IMR-90 (cell line): ENCODE measurements at regions of chrX and their contacts with region 1.

Region 1: DNA sequence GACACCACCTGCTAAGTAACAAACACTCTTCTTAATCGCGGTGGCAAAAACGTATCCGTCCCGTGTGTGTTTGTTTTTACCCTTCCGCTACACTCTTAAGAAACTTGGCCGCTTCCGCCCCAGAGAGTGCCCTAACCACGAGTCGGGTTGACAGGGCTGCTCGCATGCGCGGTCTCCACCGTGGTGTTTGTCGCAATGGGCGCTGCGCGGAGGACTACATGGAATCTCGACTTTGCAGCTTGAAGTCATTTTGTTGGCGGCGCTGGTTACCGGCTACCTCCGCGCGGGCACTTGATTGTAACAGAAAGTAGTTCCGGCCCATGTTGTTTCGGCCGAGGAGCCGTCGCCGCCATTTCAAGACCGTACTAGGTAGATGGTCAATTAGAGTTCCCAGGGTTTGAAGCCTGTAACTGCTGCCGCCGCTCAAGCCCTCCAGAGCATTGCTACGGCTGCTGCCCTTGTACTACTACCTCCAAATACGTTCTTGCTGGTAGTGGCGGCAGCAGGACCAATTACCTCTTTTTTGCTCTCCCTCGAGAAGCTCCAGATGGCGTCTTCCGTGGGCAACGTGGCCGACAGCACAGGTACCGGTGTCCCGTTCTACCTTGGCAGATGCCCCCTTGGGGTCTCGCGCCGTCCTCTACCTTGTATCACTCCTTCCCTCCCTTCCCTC is at the start of gene OGT:
- DNase-seq: peak; percentile 97
- ATAC-seq: peak; percentile 92
- H3K4me3 ChIP-seq: peak within 1 kb of the TSS; percentile 81
- H3K27ac ChIP-seq: peak within 1 kb of the TSS; percentile 88
- H3K4me1 ChIP-seq: peaks cover 2% of the 10 kb centered on the region; the same call in 1 of the 2 replicates
- H3K27me3 ChIP-seq: peaks cover 2% of the 10 kb centered on the region; the same call in 1 of the 2 replicates
- CTCF ChIP-seq: no peak
- POLR2A ChIP-seq: peak; percentile 85
- RAD21 ChIP-seq: no peak
- total RNA-seq, gene OGT: 65.0 and 80.7 TPM in 2 replicates

Region 2: DNA sequence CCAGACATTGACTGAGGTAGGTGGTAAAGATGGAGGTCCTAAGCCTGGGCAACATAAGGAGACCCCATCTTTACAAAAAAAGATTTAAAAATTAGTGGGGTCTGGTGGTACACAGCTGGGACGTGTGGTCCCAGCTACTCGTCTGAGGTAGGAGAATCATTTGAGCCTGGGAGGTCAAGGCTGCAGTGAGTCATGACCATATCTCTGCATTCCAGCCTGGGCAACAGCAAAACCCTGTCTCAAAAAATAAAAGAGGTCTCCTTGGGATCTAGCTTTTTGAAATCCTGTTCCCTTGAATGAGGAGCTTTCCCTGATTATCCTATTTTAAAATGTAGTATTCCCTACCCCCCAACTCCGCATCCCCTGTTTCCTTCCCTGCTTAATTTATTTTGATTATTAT is 78.7 kb before region 1 on chrX:
- CTCF ChIA-PET with region 1: no interaction called
- POLR2A ChIA-PET with region 1: no interaction called
- dilution Hi-C with region 1: no loop called
- in situ Hi-C with region 1: no loop called
- intact Hi-C with region 1: loop called (anchors 5 kb)
- DNase-seq: peak; percentile 42
- ATAC-seq: peak; percentile 85
- H3K4me3 ChIP-seq: no peak overlapping the region
- H3K27ac ChIP-seq: no peak overlapping the region
- H3K4me1 ChIP-seq: no peaks in the 10 kb centered on the region; the same call in 1 of the 2 replicates
- H3K27me3 ChIP-seq: peaks cover 3% of the 10 kb centered on the region; the same call in 1 of the 2 replicates
- CTCF ChIP-seq: no peak
- POLR2A ChIP-seq: no peak
- RAD21 ChIP-seq: no peak

Region 3: DNA sequence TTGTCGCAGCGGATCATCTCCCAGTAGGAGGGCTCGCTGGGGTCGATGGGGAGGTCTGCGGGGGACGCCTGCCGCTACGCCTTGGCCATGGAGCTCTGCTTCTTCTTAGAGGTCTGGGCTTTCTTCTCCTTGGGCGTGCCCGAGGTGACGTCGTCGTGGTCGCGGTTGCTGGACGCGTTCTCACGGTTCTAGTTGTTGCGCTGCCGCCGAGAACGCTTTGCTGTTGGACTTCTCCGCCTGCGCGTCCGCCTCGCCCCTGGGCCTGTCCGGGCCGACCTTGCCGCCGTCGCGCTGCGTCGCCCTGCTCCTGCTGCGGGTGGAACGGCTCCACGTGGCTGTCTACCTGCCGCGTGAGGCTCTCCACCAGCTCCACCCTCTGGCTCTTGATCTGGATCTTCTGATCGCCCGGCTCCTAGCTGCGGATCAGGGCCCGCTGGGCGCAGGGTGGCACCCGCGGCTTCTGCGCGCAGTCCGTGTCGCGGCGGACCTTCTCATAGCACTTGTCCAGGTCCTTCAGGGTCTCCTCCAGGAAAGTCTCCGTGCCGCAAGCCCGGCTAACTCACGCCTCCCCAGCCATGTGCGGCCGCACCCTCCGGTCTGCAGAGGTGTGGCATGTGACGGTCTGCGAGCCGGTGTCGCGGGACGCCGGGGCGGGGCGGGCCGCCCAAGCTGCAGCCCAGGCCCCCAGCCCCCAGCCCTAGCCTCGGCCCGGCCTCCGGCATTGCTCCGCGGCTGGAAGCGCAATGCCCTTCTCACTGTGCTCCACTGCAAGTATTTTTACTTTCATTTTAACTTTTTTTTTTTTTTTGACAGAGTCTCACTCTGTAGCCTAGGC is 40.4 kb before region 1 on chrX:
- CTCF ChIA-PET with region 1: no interaction called
- POLR2A ChIA-PET with region 1: no interaction called
- dilution Hi-C with region 1: no loop called
- in situ Hi-C with region 1: no loop called
- intact Hi-C with region 1: loop called (anchors 2 kb)
- DNase-seq: peak; percentile 26
- ATAC-seq: peak; percentile 75
- H3K4me3 ChIP-seq: peak overlapping the region; percentile 54
- H3K27ac ChIP-seq: no peak overlapping the region
- H3K4me1 ChIP-seq: no peaks in the 10 kb centered on the region
- H3K27me3 ChIP-seq: no peaks in the 10 kb centered on the region
- CTCF ChIP-seq: no peak
- POLR2A ChIP-seq: no peak
- RAD21 ChIP-seq: no peak

Region 4: GRCh38 chrX:71504346-71504745 is 28.5 kb before region 1 on chrX:
- CTCF ChIA-PET with region 1: no interaction called
- POLR2A ChIA-PET with region 1: no interaction called
- dilution Hi-C with region 1: no loop called
- in situ Hi-C with region 1: no loop called
- intact Hi-C with region 1: no loop called
- DNase-seq: no peak
- ATAC-seq: no peak
- H3K4me3 ChIP-seq: no peak overlapping the region
- H3K27ac ChIP-seq: no peak overlapping the region
- H3K4me1 ChIP-seq: no peaks in the 10 kb centered on the region
- H3K27me3 ChIP-seq: no peaks in the 10 kb centered on the region
- CTCF ChIP-seq: no peak
- POLR2A ChIP-seq: no peak
- RAD21 ChIP-seq: no peak

Region 5: DNA sequence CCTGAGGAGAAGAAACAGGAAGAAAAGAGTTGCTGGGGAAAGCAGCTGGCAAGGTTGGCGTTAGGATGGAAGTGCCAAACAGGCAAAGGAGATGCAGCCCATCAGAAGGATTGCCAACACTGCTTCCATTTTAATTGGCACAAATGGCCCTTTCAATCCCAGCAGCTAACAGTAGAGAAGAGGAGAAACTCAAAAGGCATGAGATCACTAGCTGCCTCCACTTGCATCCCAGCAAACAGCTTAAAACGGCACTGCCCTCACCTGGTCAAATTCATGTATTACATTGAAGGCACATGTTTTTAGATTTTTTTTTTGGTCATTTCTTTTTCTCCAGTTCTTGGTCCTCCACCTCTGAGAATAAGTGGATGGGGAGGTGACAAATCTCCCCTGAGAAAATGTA is 119.5 kb after region 1 on chrX:
- CTCF ChIA-PET with region 1: no interaction called
- POLR2A ChIA-PET with region 1: no interaction called
- dilution Hi-C with region 1: no loop called
- in situ Hi-C with region 1: no loop called
- intact Hi-C with region 1: loop called (anchors 5 kb)
- DNase-seq: peak; percentile 59
- ATAC-seq: peak; percentile 91
- H3K4me3 ChIP-seq: no peak overlapping the region
- H3K27ac ChIP-seq: no peak overlapping the region
- H3K4me1 ChIP-seq: no peaks in the 10 kb centered on the region
- H3K27me3 ChIP-seq: peaks cover 5% of the 10 kb centered on the region
- CTCF ChIP-seq: peak; percentile 65
- POLR2A ChIP-seq: no peak
- RAD21 ChIP-seq: peak; percentile 69